ENCODE measurements at regions of chr16 and their contacts with region 1.

Region 1: GRCh38 chr16:88561485-88562369 is 8.5 kb upstream of the ZC3H18 start:
- DNase-seq: peak; percentile 29 to 85 (median 64)

Region 2: GRCh38 chr16:88442727-88443576 is 118.8 kb before region 1 on chr16:
- intact Hi-C with region 1: loop called (anchors 5 kb)
- DNase-seq: peak; percentile 33 to 87 (median 72)

Measured in head of caudate nucleus (tissue), 42 donors.